ENCODE measurements at regions of chr1 and their contacts with region 1.

Region 1: GRCh38 chr1:230978491-230979388 is at the starts of genes ARV1 and TTC13:
- DNase-seq: peak; percentile 94 to 99
- H3K4me3 ChIP-seq: peak within 1 kb of the TSS; percentile 90 to 97
- H3K27ac ChIP-seq: peak within 1 kb of the TSS; percentile 29 to 59
- H3K4me1 ChIP-seq: peaks cover 0 to 4% of the 10 kb centered on the region in 2 donors
- H3K27me3 ChIP-seq: no peaks in the 10 kb centered on the region
- CTCF ChIP-seq: peak; percentile 9 to 41 (median 28)
- total RNA-seq, gene ARV1: 9.7 TPM
- total RNA-seq, gene TTC13: 21.5 TPM

Region 2: GRCh38 chr1:230797942-230798418 is 180.8 kb before region 1 on chr1:
- intact Hi-C with region 1: loop called (anchors 1 kb)
- DNase-seq: peak in 1 of 2 donors; percentile 79
- H3K4me3 ChIP-seq: no peak overlapping the region
- H3K27ac ChIP-seq: no peak overlapping the region
- H3K4me1 ChIP-seq: no peaks in the 10 kb centered on the region
- H3K27me3 ChIP-seq: no peaks in the 10 kb centered on the region
- CTCF ChIP-seq: peak; percentile 73 to 90 (median 78)

Region 3: GRCh38 chr1:230867903-230868735 is 110.6 kb before region 1 on chr1 and contains the start of gene C1orf198:
- intact Hi-C with region 1: loop called (anchors 2 kb)
- DNase-seq: peak in 1 of 2 donors; percentile 82
- H3K4me3 ChIP-seq: peak within 1 kb of the TSS; percentile 94 to 98
- H3K27ac ChIP-seq: peak within 1 kb of the TSS; percentile 96 to 99
- H3K4me1 ChIP-seq: peaks cover 9 to 29% of the 10 kb centered on the region in 2 donors
- H3K27me3 ChIP-seq: no peaks in the 10 kb centered on the region
- CTCF ChIP-seq: no peak
- total RNA-seq, gene C1orf198: 225 TPM

Region 4: GRCh38 chr1:230940848-230941247 is 37.9 kb before region 1 on chr1:
- intact Hi-C with region 1: loop called (anchors 1 kb)
- DNase-seq: no peak
- H3K4me3 ChIP-seq: no peak overlapping the region
- H3K27ac ChIP-seq: peak overlapping the region; percentile 75 to 79
- H3K4me1 ChIP-seq: peaks cover 4 to 12% of the 10 kb centered on the region in 2 donors
- H3K27me3 ChIP-seq: no peaks in the 10 kb centered on the region
- CTCF ChIP-seq: no peak

Region 5: DNA sequence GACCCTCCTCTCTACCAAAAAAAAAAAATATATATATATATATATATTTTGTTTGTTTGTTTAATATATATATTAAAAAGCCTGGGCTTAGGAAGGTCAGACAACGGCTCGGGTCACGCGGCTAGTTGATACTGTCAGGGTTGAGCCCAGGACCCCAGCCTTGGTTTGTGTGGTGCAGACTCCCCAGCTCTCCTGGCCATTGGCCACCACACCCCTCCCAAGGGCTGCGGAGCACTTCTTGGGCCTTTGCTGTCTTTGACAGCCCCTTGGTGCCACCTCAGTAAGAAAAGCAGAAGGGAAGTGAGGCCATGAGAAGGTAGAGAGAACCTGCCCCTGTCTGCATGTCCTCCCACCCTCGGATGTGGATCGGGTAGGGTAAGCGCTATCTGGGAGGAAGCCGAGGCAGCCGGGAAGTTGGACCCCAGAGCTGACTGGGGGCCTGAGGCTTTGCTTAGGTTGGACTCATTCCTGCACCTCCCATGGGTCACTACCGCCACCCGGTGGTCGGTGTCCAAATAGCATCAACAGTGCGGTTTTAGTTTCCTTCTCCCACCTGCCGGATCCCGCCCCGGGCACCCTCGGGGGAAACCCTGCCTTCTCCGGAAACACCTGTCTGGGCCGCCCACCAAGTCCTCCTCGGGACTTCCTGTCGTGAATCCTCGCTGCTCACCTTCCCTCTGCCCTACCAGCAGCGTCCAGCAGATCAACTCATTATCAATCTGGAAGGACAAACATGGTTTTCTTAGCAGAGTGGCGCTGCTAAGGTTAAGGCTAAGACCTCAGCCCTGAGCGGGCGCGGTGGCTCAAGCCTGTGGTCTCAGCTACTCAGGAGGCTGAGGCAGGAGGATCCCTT is 232.5 kb after region 1 on chr1:
- intact Hi-C with region 1: loop called (anchors 10 kb)
- DNase-seq: peak; percentile 12 to 85
- H3K4me3 ChIP-seq: peak overlapping the region in 1 of 2 donors; percentile 59
- H3K27ac ChIP-seq: no peak overlapping the region
- H3K4me1 ChIP-seq: no peaks in the 10 kb centered on the region
- H3K27me3 ChIP-seq: no peaks in the 10 kb centered on the region
- CTCF ChIP-seq: peak; percentile 70 to 96 (median 84)

Measured in ascending aorta (tissue), 2 donors.